Activated CD4-positive, alpha-beta T cell treated with anti-CD3 and anti-CD28 coated beads for 36 hours (primary cell): ENCODE measurements at regions of chr2 and their contacts with region 1.

Region 1: GRCh38 chr2:27217217-27218121 is at the start of gene CAD:
- DNase-seq: peak; percentile 94
- ATAC-seq: peak; percentile 90
- H3K4me3 Mint-ChIP-seq: peak within 1 kb of the TSS; percentile 93
- H3K27ac Mint-ChIP-seq: peak within 1 kb of the TSS; percentile 87
- H3K4me1 Mint-ChIP-seq: peaks cover 37% of the 10 kb centered on the region
- H3K27me3 Mint-ChIP-seq: no peaks in the 10 kb centered on the region
- total RNA-seq, gene CAD: 107 to 147 TPM

Region 2: GRCh38 chr2:27123302-27124231 is 93.9 kb before region 1 on chr2 and contains the start of gene ABHD1:
- CTCF ChIA-PET with region 1: no interaction called
- POLR2A ChIA-PET with region 1: no interaction called
- intact Hi-C with region 1: loop called in 1 of 2 experiments (anchors 2 kb)
- DNase-seq: peak; percentile 72
- ATAC-seq: peak; percentile 79
- H3K4me3 Mint-ChIP-seq: peak within 1 kb of the TSS; percentile 73
- H3K27ac Mint-ChIP-seq: peak within 1 kb of the TSS; percentile 74
- H3K4me1 Mint-ChIP-seq: peaks cover 16% of the 10 kb centered on the region
- H3K27me3 Mint-ChIP-seq: peaks cover 15% of the 10 kb centered on the region
- total RNA-seq, gene ABHD1: 0.39 to 0.65 TPM

Region 3: GRCh38 chr2:27133905-27134780 is 83.3 kb before region 1 on chr2 and contains the start of gene PREB:
- CTCF ChIA-PET with region 1: no interaction called
- POLR2A ChIA-PET with region 1: no interaction called
- intact Hi-C with region 1: loop called in 1 of 2 experiments (anchors 1 kb)
- DNase-seq: peak; percentile 99
- ATAC-seq: peak; percentile 97
- H3K4me3 Mint-ChIP-seq: peak within 1 kb of the TSS; percentile 81
- H3K27ac Mint-ChIP-seq: peak within 1 kb of the TSS; percentile 94
- H3K4me1 Mint-ChIP-seq: peaks cover 16% of the 10 kb centered on the region
- H3K27me3 Mint-ChIP-seq: no peaks in the 10 kb centered on the region
- total RNA-seq, gene PREB: 59.7 to 59.9 TPM

Region 4: DNA sequence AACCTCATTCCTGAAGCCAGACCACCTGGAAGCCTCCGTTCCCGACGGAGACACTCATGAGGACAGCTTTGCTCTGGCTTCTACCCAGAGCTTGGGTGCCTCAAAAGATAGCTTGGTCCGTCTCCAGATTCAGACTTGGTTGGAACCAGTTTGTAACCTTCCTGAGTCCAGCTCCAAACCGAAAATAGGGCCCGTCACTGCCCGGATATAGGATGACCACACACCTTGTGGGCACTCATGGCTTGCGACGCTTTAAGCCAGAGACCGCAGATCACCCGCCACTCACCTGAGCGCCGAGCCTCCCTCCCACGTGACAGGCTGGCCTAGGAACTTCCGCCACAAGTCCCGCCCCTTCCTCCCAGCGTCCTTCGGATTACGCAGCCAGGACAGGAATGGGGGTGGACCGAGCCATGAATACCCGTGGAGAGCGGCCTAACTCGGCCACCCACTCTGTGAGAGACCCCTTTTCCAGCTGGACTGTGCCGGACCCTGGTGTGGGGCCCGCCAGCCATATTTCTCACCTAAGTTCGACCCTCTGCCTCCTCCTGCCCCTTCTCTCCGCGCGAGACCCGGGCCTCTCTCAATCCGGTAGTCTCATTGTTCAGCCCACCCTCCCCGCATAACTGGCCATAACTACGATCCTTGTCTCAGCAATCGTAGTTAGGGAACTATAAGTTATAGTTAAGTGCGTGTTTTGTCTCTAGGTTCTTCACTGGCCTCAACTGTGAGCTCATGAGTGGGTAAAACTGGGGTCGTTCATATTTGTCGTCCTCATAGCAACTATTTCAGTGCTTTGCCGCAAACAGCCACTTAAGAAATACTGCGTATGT is 105.5 kb after region 1 on chr2 and contains the start of gene MPV17:
- CTCF ChIA-PET with region 1: no interaction called
- POLR2A ChIA-PET with region 1: no interaction called
- intact Hi-C with region 1: loop called in 1 of 2 experiments (anchors 1 kb)
- DNase-seq: peak; percentile 94
- ATAC-seq: peak; percentile 99
- H3K4me3 Mint-ChIP-seq: peak within 1 kb of the TSS; percentile 98
- H3K27ac Mint-ChIP-seq: peak within 1 kb of the TSS; percentile 98
- H3K4me1 Mint-ChIP-seq: peaks cover 17% of the 10 kb centered on the region
- H3K27me3 Mint-ChIP-seq: no peaks in the 10 kb centered on the region
- total RNA-seq, gene MPV17: 93.4 to 103 TPM

Region 5: DNA sequence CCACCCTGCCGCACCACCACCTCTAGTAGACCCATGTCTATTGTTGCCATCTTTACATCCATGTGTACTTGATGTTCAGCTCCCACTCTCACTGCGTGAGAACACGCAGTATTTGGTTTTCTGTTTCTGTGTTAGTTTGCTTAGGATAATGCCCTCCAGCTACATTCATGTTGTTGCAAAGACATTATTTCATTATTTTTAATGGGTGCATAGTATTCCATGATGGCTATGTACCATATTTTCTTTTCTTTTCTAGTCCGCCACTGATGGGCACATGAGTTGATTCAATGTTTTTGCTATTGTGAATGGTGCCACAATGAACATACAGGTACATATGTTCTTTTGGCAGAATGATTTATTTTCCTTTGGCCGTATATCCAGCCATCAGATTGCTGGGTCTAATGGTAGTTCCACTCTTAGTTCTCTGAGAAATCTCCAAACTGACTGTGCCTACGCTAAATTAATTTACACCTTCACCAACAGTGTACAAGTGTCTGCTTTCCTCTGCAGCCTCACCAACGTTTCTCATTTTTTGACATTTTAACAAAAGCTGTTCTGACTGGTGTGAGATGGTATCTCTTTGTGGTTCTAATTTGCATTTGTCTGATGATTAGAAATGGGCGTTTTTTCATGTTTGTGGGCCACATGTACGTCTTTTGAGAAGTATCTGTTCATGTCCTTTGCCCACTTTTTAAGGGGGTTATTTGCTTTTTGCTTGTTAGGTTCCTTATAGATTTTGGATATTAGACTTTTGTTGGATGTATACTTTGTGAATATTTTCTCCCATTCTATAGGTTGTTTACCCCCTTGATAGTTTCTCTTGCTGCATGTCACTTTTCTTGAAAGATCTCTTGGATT is 173.6 kb after region 1 on chr2:
- CTCF ChIA-PET with region 1: no interaction called
- POLR2A ChIA-PET with region 1: no interaction called
- intact Hi-C with region 1: no loop called
- DNase-seq: no peak
- ATAC-seq: peak; percentile 70
- H3K4me3 Mint-ChIP-seq: peak overlapping the region; percentile 16
- H3K27ac Mint-ChIP-seq: peak overlapping the region; percentile 77
- H3K4me1 Mint-ChIP-seq: peaks cover 26% of the 10 kb centered on the region
- H3K27me3 Mint-ChIP-seq: no peaks in the 10 kb centered on the region